Activated CD4-positive, alpha-beta T cell treated with anti-CD3 and anti-CD28 coated beads for 36 hours (primary cell): ENCODE measurements at regions of chr15 and their contacts with region 1.

Region 1: GRCh38 chr15:72199711-72200212 is 2.2 kb upstream of the GRAMD2A start:
- DNase-seq: peak; percentile 82
- ATAC-seq: peak; percentile 47
- H3K4me3 Mint-ChIP-seq: no peak overlapping the region
- H3K27ac Mint-ChIP-seq: no peak overlapping the region
- H3K4me1 Mint-ChIP-seq: peaks cover 19% of the 10 kb centered on the region
- H3K27me3 Mint-ChIP-seq: peaks cover 12% of the 10 kb centered on the region

Region 2: GRCh38 chr15:71775856-71776255 is 423.9 kb before region 1 on chr15:
- CTCF ChIA-PET with region 1: no interaction called
- POLR2A ChIA-PET with region 1: no interaction called
- intact Hi-C with region 1: no loop called
- DNase-seq: no peak
- ATAC-seq: no peak
- H3K4me3 Mint-ChIP-seq: no peak overlapping the region
- H3K27ac Mint-ChIP-seq: no peak overlapping the region
- H3K4me1 Mint-ChIP-seq: peaks cover 6% of the 10 kb centered on the region
- H3K27me3 Mint-ChIP-seq: no peaks in the 10 kb centered on the region

Region 3: GRCh38 chr15:72272213-72273002 is 72.6 kb after region 1 on chr15 and contains the start of gene PARP6:
- CTCF ChIA-PET with region 1: interaction called, 10 read pairs
- POLR2A ChIA-PET with region 1: no interaction called
- intact Hi-C with region 1: loop called (anchors 2 to 5 kb)
- DNase-seq: peak; percentile 99
- ATAC-seq: peak; percentile 98
- H3K4me3 Mint-ChIP-seq: peak within 1 kb of the TSS; percentile 80
- H3K27ac Mint-ChIP-seq: peak within 1 kb of the TSS; percentile 92
- H3K4me1 Mint-ChIP-seq: peaks cover 35% of the 10 kb centered on the region
- H3K27me3 Mint-ChIP-seq: no peaks in the 10 kb centered on the region
- total RNA-seq, gene PARP6: 41.4 to 58.2 TPM

Region 4: DNA sequence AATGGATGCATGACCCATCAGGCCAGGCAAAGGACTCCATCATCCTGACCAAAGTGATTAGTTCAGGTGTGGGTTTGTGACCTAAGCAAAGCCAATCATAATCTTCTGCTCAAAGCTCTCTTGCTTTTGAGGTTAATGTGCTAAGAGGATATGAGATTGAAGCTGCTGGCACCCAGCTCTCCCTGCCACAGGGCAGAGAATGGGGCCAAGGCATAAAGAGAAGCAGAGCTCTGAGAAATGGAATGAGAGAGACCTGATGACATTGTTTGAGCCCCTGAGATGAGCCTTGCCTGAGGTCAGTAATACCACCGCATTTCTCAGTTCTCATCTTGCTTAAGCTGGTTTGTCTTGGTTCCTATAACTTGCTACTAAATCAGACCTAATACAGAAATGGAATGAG is 79.0 kb after region 1 on chr15:
- CTCF ChIA-PET with region 1: interaction called, 10 read pairs
- POLR2A ChIA-PET with region 1: no interaction called
- intact Hi-C with region 1: loop called (anchors 2 to 5 kb)
- DNase-seq: no peak
- ATAC-seq: no peak
- H3K4me3 Mint-ChIP-seq: no peak overlapping the region
- H3K27ac Mint-ChIP-seq: no peak overlapping the region
- H3K4me1 Mint-ChIP-seq: peaks cover 5% of the 10 kb centered on the region
- H3K27me3 Mint-ChIP-seq: no peaks in the 10 kb centered on the region

Region 5: DNA sequence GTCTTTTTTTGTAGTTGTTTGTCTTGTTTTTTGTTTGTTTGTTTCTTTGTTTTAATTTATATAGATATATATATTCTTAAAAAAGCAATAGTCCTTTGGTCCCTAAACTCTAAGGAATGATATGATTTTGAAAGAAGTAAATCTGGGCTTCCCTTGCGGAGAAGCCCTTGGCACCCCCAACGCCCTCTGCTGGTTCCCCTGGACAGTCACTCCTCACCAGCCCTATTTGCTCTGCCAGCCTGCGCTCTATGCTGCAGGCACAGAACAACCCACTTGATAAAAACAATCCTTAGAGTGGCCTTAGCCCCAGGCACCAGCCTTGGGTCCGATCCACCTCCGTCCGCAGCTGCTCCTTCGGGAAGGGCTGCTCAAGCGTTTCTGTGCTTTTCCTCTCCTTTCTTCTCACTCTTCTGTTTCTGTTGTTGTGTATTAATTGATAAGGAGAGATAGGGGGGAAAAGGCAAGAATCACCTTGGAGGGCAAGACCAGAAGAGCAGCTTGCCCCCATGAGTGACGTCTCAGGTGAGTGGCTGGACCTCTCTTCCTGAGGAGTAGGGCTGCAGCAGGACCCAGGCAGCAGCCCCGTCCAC is 86.3 kb after region 1 on chr15:
- CTCF ChIA-PET with region 1: interaction called, 5 read pairs
- POLR2A ChIA-PET with region 1: no interaction called
- intact Hi-C with region 1: loop called (anchors 1 kb)
- DNase-seq: peak; percentile 74
- ATAC-seq: peak; percentile 58
- H3K4me3 Mint-ChIP-seq: no peak overlapping the region
- H3K27ac Mint-ChIP-seq: no peak overlapping the region
- H3K4me1 Mint-ChIP-seq: no peaks in the 10 kb centered on the region
- H3K27me3 Mint-ChIP-seq: no peaks in the 10 kb centered on the region